Activated CD4-positive, alpha-beta memory T cell treated with anti-CD3 and anti-CD28 coated beads for 36 hours (primary cell): ENCODE measurements at regions of chr2 and their contacts with region 1.

Region 1: DNA sequence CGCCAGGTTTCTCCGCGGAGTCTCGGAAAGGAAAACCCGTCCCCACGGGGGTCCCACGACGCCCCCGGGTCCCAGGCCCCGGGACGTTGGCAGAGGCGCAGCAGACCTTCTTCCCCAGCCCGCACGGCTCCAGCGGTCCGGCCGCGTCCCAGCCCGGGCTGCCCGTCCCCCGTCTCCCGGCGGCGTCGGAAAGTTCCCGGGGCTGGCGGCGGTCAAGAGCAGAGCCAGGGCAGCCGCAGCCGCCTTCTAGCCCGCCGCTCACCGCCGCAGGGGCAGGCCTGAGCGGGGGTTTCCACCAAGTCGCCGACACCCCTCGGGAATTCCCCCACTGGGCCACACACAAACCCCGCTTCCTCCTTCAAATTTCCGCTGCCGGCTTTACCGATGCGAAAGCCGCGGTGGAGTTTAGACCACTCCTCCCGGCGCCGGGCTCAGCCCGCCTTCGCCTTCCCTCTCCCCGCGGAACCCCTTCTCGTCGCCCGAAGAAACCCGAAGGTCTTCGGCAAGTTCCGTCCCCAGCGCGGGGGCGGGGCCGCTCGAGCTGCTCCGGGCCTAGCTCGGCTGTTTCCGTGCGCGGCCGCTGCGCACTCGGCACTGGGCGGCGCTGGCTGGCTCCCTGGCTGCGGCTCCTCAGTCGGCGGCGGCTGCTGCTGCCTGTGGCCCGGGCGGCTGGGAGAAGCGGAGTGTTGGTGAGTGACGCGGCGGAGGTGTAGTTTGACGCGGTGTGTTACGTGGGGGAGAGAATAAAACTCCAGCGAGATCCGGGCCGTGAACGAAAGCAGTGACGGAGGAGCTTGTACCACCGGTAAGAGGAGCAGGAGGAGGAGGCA is at the start of gene CREB1:
- DNase-seq: peak; percentile 100
- H3K4me3 Mint-ChIP-seq: peak within 1 kb of the TSS; percentile 89
- H3K27ac Mint-ChIP-seq: peak within 1 kb of the TSS; percentile 99
- H3K4me1 Mint-ChIP-seq: peaks cover 50% of the 10 kb centered on the region
- H3K27me3 Mint-ChIP-seq: no peaks in the 10 kb centered on the region
- total RNA-seq, gene CREB1: 90.7 to 92.2 TPM

Region 2: DNA sequence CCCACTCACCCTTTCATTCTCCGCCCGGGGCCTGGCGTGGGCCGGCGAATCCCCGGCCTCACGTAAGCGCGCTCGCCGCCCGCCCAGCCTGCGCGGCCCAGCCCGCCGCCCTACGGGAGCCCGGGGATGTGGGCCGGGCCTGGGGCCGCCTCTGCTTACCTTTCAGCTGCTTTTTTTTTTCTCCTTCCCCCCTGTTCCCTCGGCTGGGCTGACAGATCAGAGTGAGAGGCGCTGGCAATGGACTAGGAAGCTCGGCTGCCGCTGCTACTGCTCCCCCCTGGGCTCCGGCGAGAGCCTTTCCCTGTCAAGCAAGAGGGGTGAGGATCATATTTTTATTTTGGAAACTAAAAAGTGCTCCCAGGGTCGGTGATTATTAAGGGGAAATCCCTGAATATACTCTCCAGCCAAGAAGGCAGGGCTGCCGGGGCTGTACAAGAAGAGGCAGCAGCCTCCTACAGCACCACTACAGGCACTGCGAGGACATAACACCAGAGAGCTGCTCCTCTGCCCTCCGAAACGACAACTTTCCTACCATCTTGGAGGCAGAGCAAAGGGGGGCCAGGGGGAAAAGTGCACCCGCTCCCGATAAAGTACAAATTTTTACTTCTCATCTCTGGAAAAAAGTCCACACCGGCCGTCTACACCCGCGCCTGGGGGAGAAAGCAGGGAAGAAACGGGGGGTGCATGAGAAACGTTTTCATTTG is 1443.7 kb before region 1 on chr2 and contains the start of gene INO80D:
- CTCF ChIA-PET with region 1: no interaction called
- POLR2A ChIA-PET with region 1: no interaction called
- intact Hi-C with region 1: loop called (anchors 10 kb)
- DNase-seq: peak; percentile 87
- H3K4me3 Mint-ChIP-seq: peak within 1 kb of the TSS; percentile 99
- H3K27ac Mint-ChIP-seq: peak within 1 kb of the TSS; percentile 100
- H3K4me1 Mint-ChIP-seq: peaks cover 14% of the 10 kb centered on the region
- H3K27me3 Mint-ChIP-seq: no peaks in the 10 kb centered on the region
- total RNA-seq, gene INO80D: 14.5 to 15.3 TPM

Region 3: GRCh38 chr2:206765242-206766056 is 764.1 kb before region 1 on chr2 and contains the starts of genes FASTKD2 and MDH1B:
- CTCF ChIA-PET with region 1: no interaction called
- POLR2A ChIA-PET with region 1: interaction called, 5 read pairs
- intact Hi-C with region 1: loop called (anchors 1 kb)
- DNase-seq: peak; percentile 94
- H3K4me3 Mint-ChIP-seq: peak within 1 kb of the TSS; percentile 93
- H3K27ac Mint-ChIP-seq: peak within 1 kb of the TSS; percentile 96
- H3K4me1 Mint-ChIP-seq: peaks cover 31% of the 10 kb centered on the region
- H3K27me3 Mint-ChIP-seq: no peaks in the 10 kb centered on the region
- total RNA-seq, gene FASTKD2: 31.3 to 32.0 TPM
- total RNA-seq, gene MDH1B: 0.74 to 0.87 TPM

Region 4: DNA sequence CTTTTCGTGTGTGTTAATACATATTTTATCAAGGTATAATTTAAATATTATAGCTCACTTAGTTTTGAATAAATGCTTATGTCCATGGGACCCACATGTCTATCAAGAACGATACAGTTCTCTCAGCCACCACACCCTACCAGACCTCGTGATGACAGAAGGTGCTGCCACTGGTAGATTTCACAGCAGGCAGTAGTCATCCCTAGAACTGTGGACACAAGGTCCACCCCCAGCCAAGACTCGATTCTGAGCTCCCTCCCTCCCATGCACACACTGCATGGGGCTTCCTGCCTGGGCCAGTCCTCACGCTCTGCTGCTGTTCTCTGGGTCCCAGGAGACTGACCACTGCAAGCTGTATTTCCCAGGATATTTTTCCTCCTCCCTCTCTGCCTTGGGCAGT is 26.3 kb before region 1 on chr2:
- CTCF ChIA-PET with region 1: interaction called, 5 read pairs
- POLR2A ChIA-PET with region 1: interaction called, 25 read pairs
- intact Hi-C with region 1: loop called (anchors 1 kb)
- DNase-seq: peak; percentile 35
- H3K4me3 Mint-ChIP-seq: no peak overlapping the region
- H3K27ac Mint-ChIP-seq: no peak overlapping the region
- H3K4me1 Mint-ChIP-seq: peaks cover 41% of the 10 kb centered on the region
- H3K27me3 Mint-ChIP-seq: no peaks in the 10 kb centered on the region

Region 5: DNA sequence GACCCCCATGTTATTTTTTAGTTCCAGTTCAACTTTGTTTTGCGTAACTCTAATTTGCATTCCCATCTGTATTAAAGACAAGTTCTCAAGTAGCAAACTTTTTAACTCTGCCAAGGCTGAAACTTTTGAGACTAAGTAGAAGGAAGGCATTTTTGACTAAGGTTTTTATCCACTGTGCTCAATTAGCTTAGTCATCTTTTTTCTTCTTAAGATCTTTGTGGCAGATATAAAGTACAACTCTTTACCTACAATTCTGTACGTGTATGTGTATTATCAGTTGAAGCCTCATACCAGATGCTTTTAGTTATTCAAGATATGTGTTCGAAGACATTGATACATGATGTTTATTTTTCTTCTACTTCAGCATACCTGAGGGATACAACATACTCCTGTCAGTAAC is 41.8 kb after region 1 on chr2:
- CTCF ChIA-PET with region 1: no interaction called
- POLR2A ChIA-PET with region 1: interaction called, 3 read pairs
- intact Hi-C with region 1: loop called (anchors 5 kb)
- DNase-seq: no peak
- H3K4me3 Mint-ChIP-seq: no peak overlapping the region
- H3K27ac Mint-ChIP-seq: peak overlapping the region; percentile 34
- H3K4me1 Mint-ChIP-seq: peaks cover 26% of the 10 kb centered on the region
- H3K27me3 Mint-ChIP-seq: no peaks in the 10 kb centered on the region

Region 6: DNA sequence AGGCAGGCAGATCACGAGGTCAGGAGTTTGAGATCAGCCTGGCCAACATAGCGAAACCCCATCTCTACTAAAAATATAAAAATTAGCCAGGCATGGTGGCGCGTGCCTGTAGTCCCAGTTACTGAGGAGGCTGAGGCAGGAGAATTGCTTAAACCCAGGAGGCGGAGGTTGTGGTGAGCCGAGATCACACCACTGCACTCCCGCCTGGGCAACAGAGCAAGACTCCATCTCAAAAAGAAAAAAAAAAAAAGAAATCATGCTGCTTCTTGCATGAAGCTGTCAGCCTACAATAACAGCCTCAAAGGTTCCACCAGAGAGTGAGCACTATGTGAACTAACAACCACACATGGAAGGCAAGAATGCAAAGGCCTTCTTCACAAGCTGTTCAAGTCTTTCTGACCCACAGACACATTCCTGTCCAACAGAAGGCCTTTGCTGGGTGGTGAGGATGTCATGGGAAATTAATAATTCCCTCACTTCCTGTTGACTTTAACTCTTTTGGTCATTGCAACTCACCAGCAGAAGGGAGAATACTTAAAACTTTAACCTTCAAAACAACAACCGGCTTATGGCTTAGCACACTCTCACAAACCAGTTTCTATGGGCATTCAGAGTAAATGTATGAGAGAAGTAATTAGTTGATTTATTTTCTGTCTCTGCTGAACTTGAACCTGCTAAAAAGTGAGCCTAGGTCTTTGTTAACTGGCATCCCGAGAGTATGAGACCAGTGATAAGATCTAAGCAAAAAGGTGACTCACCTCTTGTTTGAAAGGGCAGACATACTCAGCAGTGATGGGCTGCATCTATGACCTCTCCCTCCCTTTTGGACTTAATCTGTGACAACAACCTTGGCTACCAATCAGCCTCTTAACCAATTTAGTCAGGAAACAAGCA is 484.0 kb after region 1 on chr2:
- CTCF ChIA-PET with region 1: no interaction called
- POLR2A ChIA-PET with region 1: no interaction called
- intact Hi-C with region 1: loop called (anchors 5 kb)
- DNase-seq: peak; percentile 20
- H3K4me3 Mint-ChIP-seq: no peak overlapping the region
- H3K27ac Mint-ChIP-seq: peak overlapping the region; percentile 3
- H3K4me1 Mint-ChIP-seq: peaks cover 44% of the 10 kb centered on the region
- H3K27me3 Mint-ChIP-seq: no peaks in the 10 kb centered on the region